Gastrocnemius medialis (tissue), 4 donors: ENCODE measurements at regions of chr2 and their contacts with region 1.

Region 1: DNA sequence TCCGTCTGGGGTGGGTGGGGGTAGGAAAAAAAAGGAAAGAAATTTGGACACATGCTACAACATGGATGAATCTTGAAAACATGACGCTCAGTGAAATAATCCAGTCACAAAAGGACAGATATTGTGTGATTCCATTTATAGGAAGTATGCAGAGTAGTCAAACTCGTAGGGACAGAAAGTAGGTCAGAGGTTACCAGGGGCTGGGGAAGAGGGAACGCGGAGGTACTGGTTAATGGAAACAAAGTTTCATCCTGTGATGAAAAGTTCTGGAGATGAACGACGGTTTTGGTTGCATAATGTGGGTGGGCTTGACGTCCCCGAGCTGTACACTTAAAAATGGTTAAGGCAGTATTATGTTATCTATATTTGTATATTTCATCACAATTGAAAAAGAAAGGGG is 4.5 kb upstream of the SFTPB start:
- DNase-seq: peak in 1 of 2 donors; percentile 6
- ATAC-seq: no peak
- H3K4me3 ChIP-seq: no peak overlapping the region
- H3K27ac ChIP-seq: peak overlapping the region in 1 of 4 donors; percentile 19
- H3K4me1 ChIP-seq: peaks cover 16 to 26% of the 10 kb centered on the region in 2 donors
- H3K27me3 ChIP-seq: no peaks in the 10 kb centered on the region
- CTCF ChIP-seq: no peak
- POLR2A ChIP-seq: no peak

Region 2: GRCh38 chr2:85648619-85649018 is 23.8 kb before region 1 on chr2:
- in situ Hi-C with region 1: no loop called
- intact Hi-C with region 1: loop called (anchors 2 kb)
- DNase-seq: no peak
- ATAC-seq: no peak
- H3K4me3 ChIP-seq: no peak overlapping the region
- H3K27ac ChIP-seq: peak overlapping the region; percentile 48 to 92 (median 82)
- H3K4me1 ChIP-seq: peaks cover 8 to 11% of the 10 kb centered on the region in 2 donors
- H3K27me3 ChIP-seq: no peaks in the 10 kb centered on the region
- CTCF ChIP-seq: peak; percentile 17 to 51 (median 42)
- POLR2A ChIP-seq: no peak

Region 3: GRCh38 chr2:85765081-85765731 is 92.8 kb after region 1 on chr2:
- in situ Hi-C with region 1: no loop called
- intact Hi-C with region 1: no loop called
- DNase-seq: no peak
- ATAC-seq: no peak
- H3K4me3 ChIP-seq: no peak overlapping the region
- H3K27ac ChIP-seq: peak overlapping the region in 1 of 4 donors; percentile 21
- H3K4me1 ChIP-seq: peaks cover 60 to 85% of the 10 kb centered on the region in 2 donors
- H3K27me3 ChIP-seq: no peaks in the 10 kb centered on the region
- CTCF ChIP-seq: no peak
- POLR2A ChIP-seq: no peak